Cardiac septum (tissue), 1 donor: ENCODE measurements at regions of chr5 and their contacts with region 1.

Region 1: DNA sequence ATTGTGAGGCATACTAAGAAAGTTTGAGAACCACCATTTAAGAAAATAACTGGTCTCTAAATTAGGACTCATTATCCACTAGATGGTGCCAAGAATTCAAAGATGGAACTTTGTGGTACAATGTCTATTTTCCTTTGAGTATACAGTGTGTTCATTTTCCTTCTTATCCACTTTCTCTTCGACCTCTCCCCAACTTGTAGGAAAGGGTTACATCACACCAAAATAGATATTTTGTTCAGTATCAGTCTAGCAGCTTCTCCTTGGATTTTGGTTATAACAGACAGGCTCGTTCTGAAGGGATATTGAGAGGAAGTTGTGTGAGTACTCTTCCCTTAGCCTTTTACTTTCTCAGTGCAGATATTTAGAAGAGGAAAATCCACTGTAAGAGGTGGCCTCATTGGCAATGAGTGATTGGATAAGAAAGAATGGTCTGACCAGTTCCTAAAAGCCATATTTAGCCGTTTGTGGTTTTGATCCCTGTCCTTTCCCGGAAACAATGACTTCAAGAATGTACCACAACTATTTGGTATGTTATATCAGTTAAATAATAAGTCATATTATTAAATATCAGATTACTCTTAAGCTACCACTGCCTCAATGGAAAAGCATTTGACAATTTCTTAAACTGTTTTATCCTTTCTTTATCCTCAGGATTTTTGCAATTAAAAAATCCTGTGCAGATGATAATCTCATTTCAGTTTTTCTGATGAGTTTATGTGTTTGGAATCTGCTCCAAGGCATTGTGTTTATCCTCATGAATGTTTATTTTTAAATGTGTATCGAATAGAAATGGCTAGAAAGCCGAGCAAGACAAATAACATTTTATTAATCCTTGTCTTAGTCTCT is 69.0 kb upstream of the GRAMD2B start:
- DNase-seq: no peak

Region 2: GRCh38 chr5:126422989-126423788 is 69.0 kb after region 1 on chr5 and contains the start of gene GRAMD2B:
- intact Hi-C with region 1: loop called (anchors 5 kb)
- DNase-seq: peak; percentile 89
- total RNA-seq, gene GRAMD2B: 33.4 TPM

Region 3: GRCh38 chr5:126490167-126490940 is 136.1 kb after region 1 on chr5:
- intact Hi-C with region 1: loop called (anchors 5 kb)
- DNase-seq: no peak

Region 4: GRCh38 chr5:126544087-126544740 is 190.0 kb after region 1 on chr5:
- intact Hi-C with region 1: loop called (anchors 1 kb)
- DNase-seq: no peak